ENCODE measurements at regions of chr19 and their contacts with region 1.

Region 1: GRCh38 chr19:17932485-17933338 is at the start of gene CCDC124:
- DNase-seq: peak; percentile 78
- ATAC-seq: peak; percentile 95
- H3K4me3 ChIP-seq: peak within 1 kb of the TSS; percentile 90
- H3K27ac ChIP-seq: peak within 1 kb of the TSS; percentile 89
- H3K4me1 ChIP-seq: peaks cover 26% of the 10 kb centered on the region
- H3K27me3 ChIP-seq: no peaks in the 10 kb centered on the region
- CTCF ChIP-seq: peak; percentile 99
- EP300 ChIP-seq: 0 out of 4 replicates have a peak, but pooled peaks of 1 of the 2 experiments have one; percentile 2
- POLR2A ChIP-seq: peak; percentile 91
- RAD21 ChIP-seq: peak; percentile 97
- polyA plus RNA-seq, gene CCDC124: 3.7 to 16.1 TPM

Region 2: DNA sequence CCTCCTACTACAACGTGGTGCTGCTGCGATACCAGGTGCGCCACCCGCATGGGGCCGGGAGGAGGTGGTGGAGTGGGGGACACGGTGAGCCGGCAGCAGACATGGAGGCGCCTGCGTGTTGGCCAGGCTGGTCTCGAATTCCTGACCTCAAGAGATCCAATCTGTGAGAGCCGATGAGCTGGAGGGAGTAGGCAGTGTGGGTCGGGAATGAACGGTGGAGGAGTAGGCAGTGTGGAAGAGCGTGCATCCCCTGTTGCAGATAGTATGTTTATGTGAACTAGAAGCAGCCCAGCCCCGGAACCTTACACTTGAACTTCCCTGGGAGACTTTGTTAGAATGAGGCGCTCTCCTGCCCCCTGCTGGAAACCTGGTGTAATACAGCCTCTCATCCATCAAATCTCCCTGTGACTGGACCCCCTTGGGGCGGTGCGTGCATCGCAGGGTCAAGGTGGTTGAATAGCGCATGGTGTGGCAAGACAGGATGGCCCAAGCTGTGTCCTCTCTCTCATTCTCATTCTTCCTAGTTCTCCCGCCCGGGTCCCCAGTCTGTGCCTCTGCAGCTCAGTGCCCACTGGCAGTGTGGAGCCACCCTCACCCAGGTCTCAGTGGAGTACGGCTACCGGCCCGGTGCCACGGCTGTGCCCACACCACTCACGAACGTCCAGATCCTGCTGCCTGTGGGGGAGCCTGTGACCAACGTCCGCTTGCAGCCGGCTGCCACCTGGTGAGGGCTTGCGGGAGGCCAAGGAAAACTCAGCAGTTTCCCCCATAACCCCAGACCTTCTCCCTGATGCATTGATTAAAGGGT is 148.3 kb before region 1 on chr19:
- CTCF ChIA-PET with region 1: no interaction called
- POLR2A ChIA-PET with region 1: no interaction called
- RAD21 ChIA-PET with region 1: no interaction called
- SMC1A ChIA-PET with region 1: no interaction called
- in situ Hi-C with region 1: no loop called
- intact Hi-C with region 1: loop called (anchors 10 kb)
- DNase-seq: no peak
- ATAC-seq: peak; percentile 88
- H3K4me3 ChIP-seq: no peak overlapping the region
- H3K27ac ChIP-seq: no peak overlapping the region
- H3K4me1 ChIP-seq: no peaks in the 10 kb centered on the region
- H3K27me3 ChIP-seq: no peaks in the 10 kb centered on the region
- CTCF ChIP-seq: peak; percentile 79 to 84 (median 83)
- EP300 ChIP-seq: no peak
- POLR2A ChIP-seq: no peak
- RAD21 ChIP-seq: peak; percentile 79

Region 3: DNA sequence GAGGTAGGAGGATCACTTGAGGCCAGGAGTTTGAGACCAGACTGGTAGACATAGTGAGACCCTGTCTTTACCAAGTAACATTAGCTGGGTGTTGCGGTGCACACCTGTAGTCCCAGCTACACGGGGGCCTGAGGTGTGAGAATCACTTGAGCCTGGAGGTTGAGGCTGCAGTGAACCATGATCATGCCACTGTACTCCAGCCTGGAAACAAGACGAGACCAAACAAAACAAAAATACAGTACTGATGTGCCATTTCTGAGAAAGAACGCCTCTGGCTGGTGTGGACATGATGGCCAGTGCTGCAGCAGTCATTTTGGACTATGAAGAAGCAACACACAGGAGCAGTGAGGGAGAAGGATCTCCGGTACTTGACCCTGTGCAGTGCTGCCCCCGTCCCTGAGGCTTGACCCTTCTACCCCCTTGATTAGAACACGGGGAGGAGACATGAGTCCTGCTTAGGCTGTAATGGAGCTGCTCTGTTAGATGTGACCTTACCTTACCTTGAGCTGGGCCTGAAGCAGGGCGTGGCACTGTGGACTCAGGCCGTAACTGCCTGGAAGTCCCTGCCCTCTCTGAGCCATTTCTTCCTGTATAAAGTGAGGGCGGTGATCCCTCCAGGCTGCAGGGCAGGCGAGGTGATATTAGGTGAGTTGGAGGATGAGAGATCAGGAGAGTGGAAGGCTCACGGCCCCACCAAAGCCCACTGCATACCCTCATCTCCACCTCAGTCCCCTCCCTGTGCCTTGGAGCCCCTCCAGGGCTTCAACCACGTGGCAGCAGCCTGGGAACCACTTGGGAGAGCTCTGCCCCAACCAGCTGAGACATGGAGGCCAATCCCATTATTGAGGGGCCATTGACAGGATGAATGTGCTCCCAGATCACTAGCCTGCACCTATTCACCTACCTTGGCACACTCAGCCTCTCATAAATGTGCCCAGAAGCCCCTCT is 67.1 kb before region 1 on chr19:
- CTCF ChIA-PET with region 1: interaction called, 251 read pairs
- POLR2A ChIA-PET with region 1: interaction called, 65 read pairs
- RAD21 ChIA-PET with region 1: interaction called, 228 read pairs
- SMC1A ChIA-PET with region 1: interaction called, 137 read pairs
- in situ Hi-C with region 1: loop called (anchors 5 kb)
- intact Hi-C with region 1: loop called (anchors 1 kb)
- DNase-seq: no peak
- ATAC-seq: peak; percentile 29
- H3K4me3 ChIP-seq: no peak overlapping the region
- H3K27ac ChIP-seq: no peak overlapping the region
- H3K4me1 ChIP-seq: peaks cover 12% of the 10 kb centered on the region
- H3K27me3 ChIP-seq: no peaks in the 10 kb centered on the region
- CTCF ChIP-seq: no peak
- EP300 ChIP-seq: no peak
- POLR2A ChIP-seq: peak; percentile 61
- RAD21 ChIP-seq: no peak

Region 4: GRCh38 chr19:17873786-17874757 is 58.6 kb before region 1 on chr19:
- CTCF ChIA-PET with region 1: interaction called, 36 read pairs
- POLR2A ChIA-PET with region 1: interaction called, 4 read pairs
- RAD21 ChIA-PET with region 1: interaction called, 33 read pairs
- SMC1A ChIA-PET with region 1: interaction called, 11 read pairs
- in situ Hi-C with region 1: loop called (anchors 5 kb)
- intact Hi-C with region 1: loop called (anchors 1 kb)
- DNase-seq: no peak
- ATAC-seq: peak; percentile 90
- H3K4me3 ChIP-seq: peak overlapping the region; percentile 1; the same call in 1 of the 2 replicates
- H3K27ac ChIP-seq: no peak overlapping the region
- H3K4me1 ChIP-seq: peaks cover 3% of the 10 kb centered on the region; the same call in 1 of the 2 replicates
- H3K27me3 ChIP-seq: peaks cover 3 to 4% of the 10 kb centered on the region in 2 experiments; a peak in 3 of 4 replicates
- CTCF ChIP-seq: no peak
- EP300 ChIP-seq: no peak
- POLR2A ChIP-seq: no peak
- RAD21 ChIP-seq: no peak

Region 5: GRCh38 chr19:17889609-17890214 is 43.0 kb before region 1 on chr19:
- CTCF ChIA-PET with region 1: interaction called, 5 read pairs
- POLR2A ChIA-PET with region 1: interaction called, 6 read pairs
- RAD21 ChIA-PET with region 1: interaction called, 4 read pairs
- SMC1A ChIA-PET with region 1: no interaction called
- in situ Hi-C with region 1: no loop called
- intact Hi-C with region 1: loop called (anchors 5 kb)
- DNase-seq: no peak
- ATAC-seq: no peak
- H3K4me3 ChIP-seq: no peak overlapping the region
- H3K27ac ChIP-seq: no peak overlapping the region
- H3K4me1 ChIP-seq: peaks cover 23% of the 10 kb centered on the region
- H3K27me3 ChIP-seq: no peaks in the 10 kb centered on the region; a peak in 1 of 4 replicates
- CTCF ChIP-seq: no peak
- EP300 ChIP-seq: no peak
- POLR2A ChIP-seq: no peak
- RAD21 ChIP-seq: no peak

Region 6: GRCh38 chr19:18000935-18001778 is 68.4 kb after region 1 on chr19:
- CTCF ChIA-PET with region 1: interaction called, 302 read pairs
- POLR2A ChIA-PET with region 1: interaction called, 9 read pairs
- RAD21 ChIA-PET with region 1: interaction called, 113 read pairs
- SMC1A ChIA-PET with region 1: interaction called, 90 read pairs
- in situ Hi-C with region 1: no loop called
- intact Hi-C with region 1: no loop called
- DNase-seq: no peak
- ATAC-seq: peak; percentile 84
- H3K4me3 ChIP-seq: peak overlapping the region; percentile 75
- H3K27ac ChIP-seq: peak overlapping the region; percentile 62
- H3K4me1 ChIP-seq: peaks cover 5% of the 10 kb centered on the region; the same call in 1 of the 2 replicates
- H3K27me3 ChIP-seq: no peaks in the 10 kb centered on the region
- CTCF ChIP-seq: no peak
- EP300 ChIP-seq: no peak
- POLR2A ChIP-seq: peak; percentile 81
- RAD21 ChIP-seq: no peak

Region 7: DNA sequence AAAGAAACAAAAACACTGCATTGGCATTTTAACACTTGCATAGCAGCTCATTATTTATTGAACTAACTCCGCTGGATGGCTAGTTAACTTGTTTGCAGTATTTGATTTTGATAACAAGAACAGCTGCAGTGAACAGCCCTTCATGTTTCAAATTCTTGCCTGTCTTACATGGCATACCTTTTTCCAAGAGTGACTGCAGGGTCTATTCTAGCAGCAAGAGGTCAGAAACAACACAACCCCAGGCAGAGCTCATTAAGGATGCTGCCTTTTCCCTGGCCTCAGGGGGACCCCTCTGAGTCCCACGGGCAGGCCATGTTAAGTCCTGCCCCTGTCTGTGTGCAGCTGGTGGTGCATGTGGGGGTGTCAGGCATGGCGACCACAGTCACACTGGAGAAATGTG is 424.3 kb after region 1 on chr19:
- CTCF ChIA-PET with region 1: no interaction called
- POLR2A ChIA-PET with region 1: no interaction called
- RAD21 ChIA-PET with region 1: no interaction called
- SMC1A ChIA-PET with region 1: no interaction called
- in situ Hi-C with region 1: no loop called
- intact Hi-C with region 1: no loop called
- DNase-seq: no peak
- ATAC-seq: no peak
- H3K4me3 ChIP-seq: no peak overlapping the region
- H3K27ac ChIP-seq: no peak overlapping the region
- H3K4me1 ChIP-seq: no peaks in the 10 kb centered on the region
- H3K27me3 ChIP-seq: no peaks in the 10 kb centered on the region
- CTCF ChIP-seq: no peak
- EP300 ChIP-seq: no peak
- POLR2A ChIP-seq: no peak
- RAD21 ChIP-seq: no peak